ENCODE measurements at regions of chr1 and their contacts with region 1.

Region 1: GRCh38 chr1:37859507-37860345 is at the start of gene MTF1:
- H3K4me3 Mint-ChIP-seq: peak within 1 kb of the TSS; percentile 94
- H3K27ac Mint-ChIP-seq: peak within 1 kb of the TSS; percentile 97
- H3K4me1 Mint-ChIP-seq: peaks cover 30% of the 10 kb centered on the region
- H3K27me3 Mint-ChIP-seq: no peaks in the 10 kb centered on the region

Region 2: GRCh38 chr1:37595440-37596319 is 264.0 kb before region 1 on chr1 and contains the start of gene GNL2:
- intact Hi-C with region 1: loop called (anchors 5 kb)
- H3K4me3 Mint-ChIP-seq: peak within 1 kb of the TSS; percentile 98
- H3K27ac Mint-ChIP-seq: peak within 1 kb of the TSS; percentile 95
- H3K4me1 Mint-ChIP-seq: peaks cover 5% of the 10 kb centered on the region
- H3K27me3 Mint-ChIP-seq: peaks cover 4% of the 10 kb centered on the region

Region 3: GRCh38 chr1:37622131-37622530 is 237.6 kb before region 1 on chr1:
- intact Hi-C with region 1: no loop called
- H3K4me3 Mint-ChIP-seq: no peak overlapping the region
- H3K27ac Mint-ChIP-seq: no peak overlapping the region
- H3K4me1 Mint-ChIP-seq: no peaks in the 10 kb centered on the region
- H3K27me3 Mint-ChIP-seq: peaks cover 34% of the 10 kb centered on the region

Region 4: GRCh38 chr1:37901191-37901892 is 41.6 kb after region 1 on chr1:
- intact Hi-C with region 1: no loop called
- H3K4me3 Mint-ChIP-seq: peak overlapping the region; percentile 18
- H3K27ac Mint-ChIP-seq: peak overlapping the region; percentile 75
- H3K4me1 Mint-ChIP-seq: peaks cover 28% of the 10 kb centered on the region
- H3K27me3 Mint-ChIP-seq: no peaks in the 10 kb centered on the region

Region 5: DNA sequence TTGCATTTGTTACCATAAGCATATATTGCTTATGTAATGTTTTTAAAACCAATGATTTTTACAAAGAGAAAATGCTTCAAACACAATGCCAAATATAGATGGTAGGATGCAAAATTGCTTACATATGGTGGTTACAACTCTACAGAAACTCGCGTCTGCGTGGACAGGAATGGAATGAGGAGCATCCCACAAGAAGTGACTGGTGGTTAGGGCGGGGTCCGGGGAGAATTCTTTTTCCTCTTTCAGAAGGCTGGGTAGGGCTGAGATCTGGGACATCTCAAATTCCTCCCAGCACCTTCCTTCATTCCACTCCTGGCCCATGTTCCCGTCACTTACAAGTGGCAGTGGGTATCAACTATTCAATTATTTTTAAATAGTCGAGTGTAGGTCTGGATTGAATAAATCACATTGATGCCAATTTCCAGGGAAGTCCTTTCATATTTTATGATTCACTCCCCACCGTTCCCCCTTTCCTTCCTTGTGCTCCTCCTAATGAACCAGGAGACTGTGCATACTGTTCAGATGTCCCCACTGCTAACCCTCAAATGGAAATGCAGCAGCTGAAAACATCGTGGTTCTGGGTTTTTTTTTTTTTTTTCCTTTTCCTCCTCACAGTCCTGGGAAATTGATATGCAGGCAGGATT is 361.4 kb after region 1 on chr1:
- intact Hi-C with region 1: no loop called
- H3K4me3 Mint-ChIP-seq: no peak overlapping the region
- H3K27ac Mint-ChIP-seq: no peak overlapping the region
- H3K4me1 Mint-ChIP-seq: no peaks in the 10 kb centered on the region
- H3K27me3 Mint-ChIP-seq: peaks cover 10% of the 10 kb centered on the region